RWPE1 (cell line): ENCODE measurements at regions of chr12 and their contacts with region 1.

Region 1: GRCh38 chr12:69254046-69254445 is 14.7 kb downstream of the CPSF6 start:
- DNase-seq: no peak
- H3K27ac ChIP-seq: no peak overlapping the region
- CTCF ChIP-seq: peak; percentile 29; the same call in 1 of the 2 replicates

Region 2: DNA sequence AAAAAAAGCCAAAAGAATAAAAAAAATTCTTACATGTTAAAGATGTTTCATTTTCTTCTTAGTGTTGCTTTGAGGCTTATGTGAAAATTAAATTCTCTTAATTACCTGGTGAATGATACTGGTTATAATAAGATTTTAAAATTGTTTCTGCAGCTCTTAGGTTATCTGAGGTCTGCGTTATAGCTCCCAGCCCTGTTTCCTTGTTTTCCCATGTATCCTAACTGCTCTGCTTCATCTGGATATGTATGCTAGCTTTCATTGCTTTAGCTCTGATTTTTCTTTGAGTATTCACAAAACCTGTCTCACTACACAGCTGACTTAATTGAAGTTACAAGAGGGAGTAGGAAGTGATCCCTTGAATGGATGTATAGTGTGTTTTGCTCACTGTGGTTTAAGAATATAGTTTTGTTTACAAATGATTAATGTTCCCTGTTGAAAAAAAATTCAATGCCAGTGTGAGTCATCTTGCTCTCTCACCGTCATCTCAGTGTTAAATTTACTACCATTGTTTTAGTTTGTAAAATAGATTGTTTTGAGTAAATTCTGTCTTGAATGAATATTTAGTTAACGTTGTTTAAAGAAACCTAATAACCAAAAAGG is 12.1 kb after region 1 on chr12:
- CTCF ChIA-PET with region 1: interaction called, 5 read pairs
- POLR2A ChIA-PET with region 1: interaction called, 13 read pairs
- DNase-seq: peak; percentile 12
- H3K27ac ChIP-seq: no peak overlapping the region
- CTCF ChIP-seq: no peak